ENCODE measurements at regions of chr11 and their contacts with region 1.

Region 1: GRCh38 chr11:116742104-116742503 is 30.7 kb downstream of the BUD13 start:
- DNase-seq: no peak
- H3K4me3 ChIP-seq: no peak overlapping the region
- CTCF ChIP-seq: no peak

Region 2: DNA sequence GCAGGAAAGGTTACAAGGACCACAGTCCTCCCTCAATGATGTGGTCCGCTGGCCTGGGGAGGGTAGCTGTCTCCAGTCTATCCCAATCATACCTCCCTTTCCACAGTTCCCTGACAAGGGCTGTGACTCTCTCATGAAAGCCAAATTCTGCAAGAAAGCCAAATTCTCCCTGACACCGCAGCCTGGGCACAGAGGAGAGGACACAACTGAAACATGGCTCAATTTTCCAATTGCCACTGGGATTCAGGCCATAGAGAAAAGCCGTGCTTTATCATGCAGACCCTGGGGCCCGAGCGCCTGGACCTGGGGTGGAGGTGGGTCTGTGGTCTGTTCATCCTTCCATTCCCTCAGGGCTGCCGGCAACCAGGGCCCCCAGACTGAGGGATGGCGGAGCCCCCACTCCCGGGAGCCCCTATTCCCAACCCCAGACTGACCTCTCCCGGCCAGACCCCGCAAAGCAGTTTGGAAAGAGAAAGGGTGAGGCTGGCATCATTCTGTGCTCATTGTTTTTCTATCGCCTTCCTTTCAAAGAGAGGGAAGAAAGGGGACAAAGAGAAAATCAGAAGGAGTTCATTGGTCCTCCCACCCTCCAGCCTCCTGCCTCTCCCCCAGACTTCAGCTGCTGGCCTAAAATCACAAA is 208.8 kb before region 1 on chr11:
- CTCF ChIA-PET with region 1: no interaction called
- POLR2A ChIA-PET with region 1: no interaction called
- DNase-seq: no peak
- H3K4me3 ChIP-seq: no peak overlapping the region
- CTCF ChIP-seq: no peak

Region 3: GRCh38 chr11:116762132-116762531 is 20.0 kb after region 1 on chr11:
- CTCF ChIA-PET with region 1: interaction called, 46 read pairs
- POLR2A ChIA-PET with region 1: no interaction called
- DNase-seq: no peak
- H3K4me3 ChIP-seq: no peak overlapping the region
- CTCF ChIP-seq: no peak